H1 (cell line): ENCODE measurements at regions of chr1 and their contacts with region 1.

Region 1: GRCh38 chr1:150609732-150610131 is 19.7 kb downstream of the ENSA start:
- DNase-seq: no peak
- H3K4me3 ChIP-seq: no peak overlapping the region
- H3K27ac ChIP-seq: peak overlapping the region; percentile 53; the same call in 1 of the 2 replicates
- H3K4me1 ChIP-seq: peaks cover 1 to 8% (median 3%) of the 10 kb centered on the region in 4 experiments; a peak in 5 of 7 replicates
- H3K27me3 ChIP-seq: no peaks in the 10 kb centered on the region
- CTCF ChIP-seq: no peak
- EP300 ChIP-seq: no peak
- POLR2A ChIP-seq: no peak
- RAD21 ChIP-seq: no peak

Region 2: GRCh38 chr1:150596095-150596892 is 13.4 kb before region 1 on chr1:
- CTCF ChIA-PET with region 1: interaction called, 4 read pairs
- POLR2A ChIA-PET with region 1: interaction called, 1,380 read pairs
- DNase-seq: no peak
- H3K4me3 ChIP-seq: no peak overlapping the region
- H3K27ac ChIP-seq: peak overlapping the region; percentile 17; the same call in 1 of the 2 replicates
- H3K4me1 ChIP-seq: peaks cover 0 to 4% (median 1%) of the 10 kb centered on the region in 4 experiments; a peak in 3 of 7 replicates
- H3K27me3 ChIP-seq: no peaks in the 10 kb centered on the region
- CTCF ChIP-seq: no peak
- EP300 ChIP-seq: no peak
- POLR2A ChIP-seq: no peak
- RAD21 ChIP-seq: no peak

Region 3: GRCh38 chr1:150621497-150622302 is 12.0 kb after region 1 on chr1:
- CTCF ChIA-PET with region 1: interaction called, 50 read pairs
- POLR2A ChIA-PET with region 1: interaction called, 125 read pairs
- DNase-seq: no peak
- H3K4me3 ChIP-seq: no peak overlapping the region
- H3K27ac ChIP-seq: no peak overlapping the region
- H3K4me1 ChIP-seq: peaks cover 0 to 7% (median 2%) of the 10 kb centered on the region in 4 experiments; a peak in 1 of 7 replicates
- H3K27me3 ChIP-seq: no peaks in the 10 kb centered on the region
- CTCF ChIP-seq: peak in 2 of 3 experiments; percentile 63 to 66; a peak in 3 of 4 replicates
- EP300 ChIP-seq: no peak
- POLR2A ChIP-seq: no peak
- RAD21 ChIP-seq: peak; percentile 47 to 60; a peak in 3 of 4 replicates

Region 4: DNA sequence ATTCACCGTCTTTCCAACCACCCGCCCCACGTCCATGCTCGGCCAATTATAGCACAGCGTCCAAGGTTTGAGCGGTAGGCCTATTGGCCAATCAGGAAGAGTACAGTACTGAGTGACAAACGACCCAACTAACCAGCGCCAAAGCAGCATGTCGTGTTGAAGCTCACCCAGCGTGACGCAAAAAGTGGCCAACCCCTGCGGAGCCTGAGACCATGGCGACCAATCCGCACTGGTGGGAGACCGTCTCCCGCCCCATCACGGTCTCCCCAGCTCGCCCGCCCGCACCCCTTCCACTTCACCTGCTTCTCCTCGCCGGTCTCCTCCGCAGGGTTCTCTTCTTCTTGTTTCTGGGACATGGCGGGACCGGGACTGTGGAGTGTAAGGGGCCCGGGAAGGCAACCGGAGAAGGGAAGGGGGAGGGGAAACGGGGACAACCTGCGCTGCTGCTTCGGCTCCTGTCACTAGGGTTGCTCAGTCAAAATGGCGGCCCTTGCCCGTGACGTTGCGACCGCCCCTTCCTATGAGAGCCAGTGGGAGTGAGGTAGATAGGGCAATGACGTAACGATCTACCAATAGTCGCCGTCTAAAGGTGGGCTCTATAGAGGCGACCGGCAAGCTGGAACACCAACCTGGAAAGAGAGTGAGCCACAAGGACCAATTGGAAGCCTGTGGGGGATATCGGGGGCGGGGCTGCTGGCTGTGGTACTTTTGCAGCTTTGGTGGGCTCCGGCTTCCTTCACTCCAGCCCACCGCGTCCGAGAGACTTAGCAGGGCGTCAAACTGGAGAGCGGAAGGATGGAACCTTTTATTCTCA is 19.6 kb after region 1 on chr1 and contains the start of gene ENSA:
- CTCF ChIA-PET with region 1: interaction called, 4 read pairs
- POLR2A ChIA-PET with region 1: interaction called, 105 read pairs
- DNase-seq: peak; percentile 94 to 96
- H3K4me3 ChIP-seq: peak within 1 kb of the TSS; percentile 72 to 94 (median 80)
- H3K27ac ChIP-seq: peak within 1 kb of the TSS; percentile 97
- H3K4me1 ChIP-seq: peaks cover 0 to 7% (median 4%) of the 10 kb centered on the region in 4 experiments; a peak in 5 of 7 replicates
- H3K27me3 ChIP-seq: no peaks in the 10 kb centered on the region
- CTCF ChIP-seq: no peak
- EP300 ChIP-seq: no peak
- POLR2A ChIP-seq: peak; percentile 62 to 66
- RAD21 ChIP-seq: no peak
- total RNA-seq, gene ENSA: 229 and 236 TPM in 2 replicates